ENCODE measurements at regions of chr10 and their contacts with region 1.

Region 1: DNA sequence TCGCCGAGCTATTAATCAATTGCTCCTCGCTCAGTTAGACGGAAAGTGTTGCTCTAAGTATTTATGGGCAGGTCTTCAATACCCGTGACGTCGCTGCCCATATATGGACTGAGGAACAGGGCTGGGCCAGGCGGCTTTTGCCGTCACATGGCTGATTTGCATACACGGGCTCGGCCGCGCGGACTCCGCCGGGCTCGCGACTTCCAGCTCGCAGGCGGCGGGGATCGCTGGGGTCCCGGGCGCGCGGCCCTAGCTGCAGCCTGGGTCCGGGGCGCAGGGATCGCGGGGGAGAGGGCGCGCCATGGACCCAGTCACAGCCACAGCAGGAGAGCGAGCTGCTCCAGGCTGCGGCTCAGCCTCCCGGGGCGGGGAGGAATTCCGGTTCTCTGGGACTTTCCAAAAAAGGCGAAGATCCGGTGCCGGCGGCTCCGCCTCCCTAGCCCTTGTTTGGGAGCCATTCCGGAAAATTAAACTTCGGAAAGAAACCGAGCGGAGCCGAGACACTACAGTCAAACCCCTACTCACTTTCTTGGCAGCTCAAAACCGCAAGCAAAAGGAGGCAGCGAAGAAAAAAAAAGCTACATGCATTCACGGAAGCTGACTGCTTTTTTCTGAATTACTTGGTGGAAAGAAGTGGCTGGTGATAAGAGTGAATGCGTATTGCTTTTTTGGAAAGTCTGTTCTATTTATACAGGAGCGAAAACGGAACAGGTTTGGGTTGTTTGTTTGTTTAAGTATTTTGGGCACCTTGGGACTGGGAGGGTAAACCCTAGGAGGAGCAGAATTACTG is at the start of gene EGR2:
- DNase-seq: peak; percentile 97 to 99 (median 98)
- H3K4me3 ChIP-seq: peak within 1 kb of the TSS; percentile 62 to 66
- H3K4me3 Mint-ChIP-seq: peak within 1 kb of the TSS; percentile 90 to 100 (median 98)
- H3K27ac ChIP-seq: peak within 1 kb of the TSS; percentile 69
- H3K27ac Mint-ChIP-seq: peak within 1 kb of the TSS; percentile 91 to 99 (median 97)
- H3K4me1 ChIP-seq: peaks cover 40% of the 10 kb centered on the region
- H3K4me1 Mint-ChIP-seq: peaks cover 25 to 56% (median 38%) of the 10 kb centered on the region in 4 donors
- H3K27me3 ChIP-seq: peaks cover 25% of the 10 kb centered on the region
- H3K27me3 Mint-ChIP-seq: peaks cover 27 to 34% of the 10 kb centered on the region in 2 donors
- total RNA-seq, gene EGR2: 2.0 to 2.2 TPM

Region 2: GRCh38 chr10:61903221-61903927 is 913.2 kb before region 1 on chr10:
- CTCF ChIA-PET with region 1: no interaction called
- POLR2A ChIA-PET with region 1: no interaction called
- intact Hi-C with region 1: loop called (anchors 1 kb)
- DNase-seq: peak; percentile 67 to 78 (median 70)
- H3K4me3 ChIP-seq: peak overlapping the region; percentile 63 to 88
- H3K4me3 Mint-ChIP-seq: peak overlapping the region; percentile 86 to 96 (median 94)
- H3K27ac ChIP-seq: peak overlapping the region; percentile 80
- H3K27ac Mint-ChIP-seq: peak overlapping the region; percentile 84 to 98 (median 97)
- H3K4me1 ChIP-seq: peaks cover 51% of the 10 kb centered on the region
- H3K4me1 Mint-ChIP-seq: peaks cover 28 to 63% (median 40%) of the 10 kb centered on the region in 4 donors
- H3K27me3 ChIP-seq: no peaks in the 10 kb centered on the region
- H3K27me3 Mint-ChIP-seq: no peaks in the 10 kb centered on the region

Region 3: DNA sequence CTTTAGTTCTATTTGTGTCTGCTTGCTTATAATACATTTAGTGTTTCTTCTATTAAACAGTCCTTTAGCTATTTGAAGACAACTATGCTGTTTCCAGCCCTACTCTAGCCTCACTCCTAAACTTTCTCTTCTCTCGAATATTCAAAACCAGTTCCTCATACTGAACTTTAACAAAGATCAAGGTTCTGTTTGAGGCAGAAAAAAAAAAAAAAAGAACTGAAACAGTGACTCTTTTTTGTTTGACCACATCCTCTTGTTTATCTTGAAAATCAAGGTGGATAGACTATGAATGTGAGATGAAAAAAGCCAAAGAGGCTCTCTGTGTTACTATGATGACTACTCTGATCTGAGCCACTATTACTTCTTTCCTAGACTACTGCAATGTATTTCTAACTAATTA is 288.1 kb before region 1 on chr10:
- CTCF ChIA-PET with region 1: interaction called, 6 read pairs
- POLR2A ChIA-PET with region 1: no interaction called
- intact Hi-C with region 1: loop called (anchors 10 kb)
- DNase-seq: peak in 4 of 5 donors; percentile 62 to 77 (median 72)
- H3K4me3 ChIP-seq: no peak overlapping the region
- H3K4me3 Mint-ChIP-seq: peak overlapping the region; percentile 4 to 78 (median 65)
- H3K27ac ChIP-seq: no peak overlapping the region
- H3K27ac Mint-ChIP-seq: peak overlapping the region; percentile 45 to 87 (median 63)
- H3K4me1 ChIP-seq: peaks cover 39% of the 10 kb centered on the region
- H3K4me1 Mint-ChIP-seq: peaks cover 30 to 41% (median 34%) of the 10 kb centered on the region in 4 donors
- H3K27me3 ChIP-seq: no peaks in the 10 kb centered on the region
- H3K27me3 Mint-ChIP-seq: peaks cover 0 to 1% of the 10 kb centered on the region in 2 donors

Region 4: DNA sequence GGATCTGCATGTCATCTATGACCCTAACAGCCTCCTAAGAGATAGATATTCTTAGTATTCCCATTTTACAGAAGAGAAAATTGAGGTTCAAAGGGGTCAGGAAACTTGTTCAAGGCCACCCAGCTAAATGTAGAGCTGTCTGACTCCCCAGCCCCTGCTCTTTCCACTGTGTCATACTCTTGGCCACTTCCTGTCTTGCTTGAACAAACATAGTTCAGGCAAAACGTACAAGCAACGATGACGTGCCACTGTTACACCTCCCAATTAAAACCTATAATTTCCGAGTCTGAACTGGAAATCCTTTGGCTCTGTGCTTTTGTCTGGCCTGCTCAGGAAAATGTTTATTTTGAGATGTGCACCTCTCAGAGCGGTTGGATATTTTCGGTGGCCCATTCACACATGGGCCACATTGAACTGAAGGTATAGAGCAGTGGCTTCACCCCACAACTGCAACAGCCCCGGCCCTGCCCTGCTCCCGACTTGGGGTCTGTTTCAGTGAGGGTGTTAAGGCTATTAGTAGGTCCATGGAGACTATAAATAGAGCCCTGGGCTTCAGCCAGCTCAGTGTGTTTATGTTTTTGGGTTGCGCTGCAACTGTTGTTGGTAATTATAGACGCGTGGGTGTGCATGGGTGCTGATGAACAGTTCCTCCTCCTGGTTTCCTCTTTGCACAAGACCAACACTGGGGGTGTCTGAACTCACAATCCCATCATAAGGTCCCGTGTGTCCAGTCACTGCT is 184.3 kb before region 1 on chr10:
- CTCF ChIA-PET with region 1: interaction called, 166 read pairs
- POLR2A ChIA-PET with region 1: interaction called, 84 read pairs
- intact Hi-C with region 1: loop called (anchors 1 kb)
- DNase-seq: peak; percentile 66 to 90 (median 77)
- H3K4me3 ChIP-seq: peak overlapping the region in 1 of 2 donors; percentile 29
- H3K4me3 Mint-ChIP-seq: peak overlapping the region; percentile 22 to 80 (median 56)
- H3K27ac ChIP-seq: no peak overlapping the region
- H3K27ac Mint-ChIP-seq: peak overlapping the region; percentile 77 to 95 (median 87)
- H3K4me1 ChIP-seq: peaks cover 39% of the 10 kb centered on the region
- H3K4me1 Mint-ChIP-seq: peaks cover 14 to 34% (median 27%) of the 10 kb centered on the region in 4 donors
- H3K27me3 ChIP-seq: no peaks in the 10 kb centered on the region
- H3K27me3 Mint-ChIP-seq: no peaks in the 10 kb centered on the region

Region 5: DNA sequence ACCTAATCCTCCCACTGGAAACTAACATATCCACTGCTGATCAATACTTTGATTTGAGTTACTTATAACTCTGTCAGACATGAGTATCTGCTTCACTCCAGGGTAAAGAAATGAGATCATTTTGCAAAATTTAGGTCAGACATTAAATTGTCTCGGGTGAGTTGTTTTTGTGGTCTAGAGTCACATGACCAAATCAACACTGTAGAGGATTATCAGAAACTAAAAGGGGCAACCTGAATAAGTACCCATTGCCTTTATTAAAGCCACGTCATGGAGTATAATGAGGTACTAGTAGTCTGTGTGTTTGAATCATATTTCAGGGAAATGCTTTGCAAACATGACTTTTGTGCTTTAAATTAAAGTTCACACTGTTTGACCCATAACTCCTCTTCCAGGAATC is 119.7 kb before region 1 on chr10:
- CTCF ChIA-PET with region 1: interaction called, 4 read pairs
- POLR2A ChIA-PET with region 1: interaction called, 12 read pairs
- intact Hi-C with region 1: no loop called
- DNase-seq: peak in 2 of 5 donors; percentile 7 to 27
- H3K4me3 ChIP-seq: no peak overlapping the region
- H3K4me3 Mint-ChIP-seq: peak overlapping the region in 1 of 8 donors; percentile 26
- H3K27ac ChIP-seq: no peak overlapping the region
- H3K27ac Mint-ChIP-seq: peak overlapping the region in 2 of 7 donors; percentile 8 to 14
- H3K4me1 ChIP-seq: peaks cover 16% of the 10 kb centered on the region
- H3K4me1 Mint-ChIP-seq: peaks cover 15 to 46% (median 36%) of the 10 kb centered on the region in 4 donors
- H3K27me3 ChIP-seq: no peaks in the 10 kb centered on the region
- H3K27me3 Mint-ChIP-seq: peaks cover 0 to 1% of the 10 kb centered on the region in 2 donors

Region 6: DNA sequence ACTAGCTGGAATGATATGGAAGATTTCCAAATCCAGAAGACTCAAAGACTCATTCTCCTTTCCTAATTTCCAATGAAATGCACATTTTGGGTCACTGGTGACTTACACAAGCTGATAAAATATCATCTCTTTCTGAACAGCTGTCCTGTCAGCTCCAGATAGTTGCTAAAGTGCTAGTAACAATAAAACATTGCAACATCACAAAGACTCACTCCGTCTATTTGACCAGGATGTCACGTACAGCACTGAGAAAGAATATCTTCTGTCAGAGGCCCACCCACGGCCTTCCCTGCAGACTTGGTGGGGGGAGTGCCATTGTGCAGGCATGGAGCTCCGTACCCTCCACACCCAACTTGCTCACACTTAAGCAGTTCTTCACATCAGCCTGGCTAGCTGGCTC is 78.5 kb after region 1 on chr10:
- CTCF ChIA-PET with region 1: no interaction called
- POLR2A ChIA-PET with region 1: no interaction called
- intact Hi-C with region 1: no loop called
- DNase-seq: no peak
- H3K4me3 ChIP-seq: no peak overlapping the region
- H3K4me3 Mint-ChIP-seq: no peak overlapping the region
- H3K27ac ChIP-seq: no peak overlapping the region
- H3K27ac Mint-ChIP-seq: no peak overlapping the region
- H3K4me1 ChIP-seq: no peaks in the 10 kb centered on the region
- H3K4me1 Mint-ChIP-seq: no peaks in the 10 kb centered on the region
- H3K27me3 ChIP-seq: no peaks in the 10 kb centered on the region
- H3K27me3 Mint-ChIP-seq: peaks cover 0 to 3% of the 10 kb centered on the region in 2 donors

Region 7: DNA sequence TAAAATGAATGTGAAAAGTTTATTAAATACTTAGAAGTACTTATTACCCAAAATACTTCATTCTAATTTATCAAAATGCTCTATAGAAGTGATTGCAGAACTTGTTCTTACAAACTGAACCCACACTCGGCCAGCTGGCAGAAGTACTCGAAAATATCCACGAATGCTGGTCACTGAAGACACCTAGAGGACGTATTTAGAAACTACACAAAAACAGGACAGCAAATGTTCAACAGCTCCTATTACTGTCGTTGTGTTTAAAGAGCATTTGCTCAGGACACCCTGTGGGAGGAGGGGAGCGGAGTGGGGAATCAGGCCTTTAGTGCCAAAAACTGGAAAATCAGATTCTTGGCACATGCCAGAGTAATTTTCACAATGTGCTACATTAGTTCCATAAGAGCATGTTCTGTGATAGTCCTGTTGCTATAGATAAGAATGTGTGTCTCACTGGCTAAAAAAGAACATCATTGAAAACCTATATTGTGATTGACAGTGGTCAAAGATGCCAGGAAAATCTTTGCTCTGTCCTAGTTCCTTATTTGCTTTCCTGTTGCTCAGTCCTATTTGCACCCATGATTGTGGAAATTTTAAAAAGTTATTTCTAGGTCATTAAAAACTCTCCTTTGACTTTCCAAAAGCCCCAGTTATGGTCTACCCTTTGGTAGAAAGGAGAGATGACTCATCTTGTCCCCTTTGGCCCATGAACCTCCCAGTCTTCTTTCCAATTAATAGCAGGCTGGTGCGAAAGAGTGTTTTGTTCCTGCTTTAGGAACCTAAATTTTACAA is 267.6 kb after region 1 on chr10:
- CTCF ChIA-PET with region 1: interaction called, 6 read pairs
- POLR2A ChIA-PET with region 1: interaction called, 3 read pairs
- intact Hi-C with region 1: loop called (anchors 2 kb)
- DNase-seq: peak; percentile 40 to 49 (median 48)
- H3K4me3 ChIP-seq: no peak overlapping the region
- H3K4me3 Mint-ChIP-seq: no peak overlapping the region
- H3K27ac ChIP-seq: no peak overlapping the region
- H3K27ac Mint-ChIP-seq: no peak overlapping the region
- H3K4me1 ChIP-seq: no peaks in the 10 kb centered on the region
- H3K4me1 Mint-ChIP-seq: peaks cover 0 to 1% (median 0%) of the 10 kb centered on the region in 4 donors
- H3K27me3 ChIP-seq: no peaks in the 10 kb centered on the region
- H3K27me3 Mint-ChIP-seq: peaks cover 8 to 12% of the 10 kb centered on the region in 2 donors

Region 8: GRCh38 chr10:63629363-63630084 is 813.0 kb after region 1 on chr10:
- CTCF ChIA-PET with region 1: no interaction called
- POLR2A ChIA-PET with region 1: interaction called, 4 read pairs
- intact Hi-C with region 1: loop called (anchors 1 kb)
- DNase-seq: peak; percentile 76 to 81 (median 77)
- H3K4me3 ChIP-seq: peak overlapping the region; percentile 59 to 70
- H3K4me3 Mint-ChIP-seq: peak overlapping the region; percentile 92 to 97 (median 95)
- H3K27ac ChIP-seq: peak overlapping the region; percentile 55
- H3K27ac Mint-ChIP-seq: peak overlapping the region; percentile 57 to 96 (median 92)
- H3K4me1 ChIP-seq: peaks cover 28% of the 10 kb centered on the region
- H3K4me1 Mint-ChIP-seq: peaks cover 17 to 29% (median 22%) of the 10 kb centered on the region in 4 donors
- H3K27me3 ChIP-seq: no peaks in the 10 kb centered on the region
- H3K27me3 Mint-ChIP-seq: no peaks in the 10 kb centered on the region

Measured in CD4-positive, alpha-beta memory T cell (primary cell).